Activated CD4-positive, alpha-beta memory T cell treated with anti-CD3 and anti-CD28 coated beads, Interleukin-2, amount 10 ng/mL, durations not matched to agents 7 days and 5 days (primary cell): ENCODE measurements at regions of chr2 and their contacts with region 1.

Region 1: GRCh38 chr2:169694113-169694903 is at the starts of genes CFAP210 and PHOSPHO2:
- DNase-seq: peak; percentile 99
- H3K4me3 Mint-ChIP-seq: peak within 1 kb of the TSS; percentile 80
- H3K27ac Mint-ChIP-seq: peak within 1 kb of the TSS; percentile 80
- H3K4me1 Mint-ChIP-seq: peaks cover 27% of the 10 kb centered on the region
- H3K27me3 Mint-ChIP-seq: peaks cover 24% of the 10 kb centered on the region
- total RNA-seq, gene CFAP210: not detected
- total RNA-seq, gene PHOSPHO2: 2.8 to 3.4 TPM

Region 2: GRCh38 chr2:169584005-169584877 is 110.1 kb before region 1 on chr2 and contains the start of gene PPIG:
- CTCF ChIA-PET with region 1: interaction called, 3 read pairs
- POLR2A ChIA-PET with region 1: interaction called, 11 read pairs
- DNase-seq: peak; percentile 89
- H3K4me3 Mint-ChIP-seq: peak within 1 kb of the TSS; percentile 99
- H3K27ac Mint-ChIP-seq: peak within 1 kb of the TSS; percentile 100
- H3K4me1 Mint-ChIP-seq: peaks cover 31% of the 10 kb centered on the region
- H3K27me3 Mint-ChIP-seq: no peaks in the 10 kb centered on the region
- total RNA-seq, gene PPIG: 48.8 to 49.6 TPM

Region 3: GRCh38 chr2:169683054-169683424 is 11.3 kb before region 1 on chr2:
- CTCF ChIA-PET with region 1: interaction called, 4 read pairs
- POLR2A ChIA-PET with region 1: interaction called, 29 read pairs
- DNase-seq: peak; percentile 38
- H3K4me3 Mint-ChIP-seq: no peak overlapping the region
- H3K27ac Mint-ChIP-seq: peak overlapping the region; percentile 32
- H3K4me1 Mint-ChIP-seq: peaks cover 22% of the 10 kb centered on the region
- H3K27me3 Mint-ChIP-seq: no peaks in the 10 kb centered on the region

Region 4: GRCh38 chr2:169759987-169760386 is 65.7 kb after region 1 on chr2:
- CTCF ChIA-PET with region 1: no interaction called
- POLR2A ChIA-PET with region 1: no interaction called
- DNase-seq: no peak
- H3K4me3 Mint-ChIP-seq: no peak overlapping the region
- H3K27ac Mint-ChIP-seq: no peak overlapping the region
- H3K4me1 Mint-ChIP-seq: peaks cover 24% of the 10 kb centered on the region
- H3K27me3 Mint-ChIP-seq: peaks cover 3% of the 10 kb centered on the region